Left ventricle myocardium superior (tissue), 1 donor: ENCODE measurements at regions of chr2 and their contacts with region 1.

Region 1: DNA sequence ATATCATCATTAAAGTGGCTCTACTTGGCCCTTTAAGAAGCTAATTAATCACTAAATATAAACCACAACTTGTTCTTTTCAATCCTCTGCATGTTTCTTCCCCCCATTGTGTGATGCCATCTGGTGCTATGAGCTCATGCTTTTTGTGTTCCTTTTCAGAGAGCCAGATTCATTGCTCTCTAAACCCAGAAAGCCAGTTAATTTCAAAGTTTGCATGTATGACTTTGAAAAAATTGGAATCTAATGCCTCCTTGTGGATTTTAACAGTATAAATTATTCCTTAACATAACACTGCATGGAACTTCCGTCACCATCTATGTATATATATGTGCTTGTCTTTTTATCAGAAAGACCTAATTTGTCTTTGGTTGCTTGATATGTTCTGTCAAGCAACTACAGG is 31.1 kb downstream of the TMEM178A start:
- DNase-seq: no peak
- ATAC-seq: peak; percentile 73

Region 2: DNA sequence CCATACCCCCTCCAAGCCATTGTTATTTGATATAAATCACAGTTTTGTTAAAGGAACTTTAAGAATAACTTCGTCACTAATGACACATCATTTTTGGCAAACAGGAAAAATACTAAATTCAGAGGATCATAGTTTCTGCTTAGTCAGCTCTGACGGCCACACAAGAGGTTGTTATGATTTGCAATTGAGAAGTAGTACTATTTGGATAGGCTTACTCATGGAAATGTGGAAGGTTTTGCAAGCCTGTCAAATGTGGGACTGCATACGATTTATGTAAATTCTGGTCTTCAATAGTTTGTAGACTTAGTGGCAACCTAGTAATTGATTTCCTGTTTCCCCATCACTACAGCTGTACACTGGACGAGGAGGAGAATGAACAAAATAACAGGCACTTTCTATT is 699.1 kb before region 1 on chr2:
- intact Hi-C with region 1: no loop called
- DNase-seq: no peak
- ATAC-seq: no peak

Region 3: GRCh38 chr2:39513641-39514094 is 183.2 kb before region 1 on chr2:
- intact Hi-C with region 1: loop called (anchors 5 kb)
- DNase-seq: no peak
- ATAC-seq: peak; percentile 47

Region 4: GRCh38 chr2:39593439-39594393 is 103.1 kb before region 1 on chr2:
- intact Hi-C with region 1: loop called (anchors 5 kb)
- DNase-seq: no peak
- ATAC-seq: peak; percentile 91

Region 5: DNA sequence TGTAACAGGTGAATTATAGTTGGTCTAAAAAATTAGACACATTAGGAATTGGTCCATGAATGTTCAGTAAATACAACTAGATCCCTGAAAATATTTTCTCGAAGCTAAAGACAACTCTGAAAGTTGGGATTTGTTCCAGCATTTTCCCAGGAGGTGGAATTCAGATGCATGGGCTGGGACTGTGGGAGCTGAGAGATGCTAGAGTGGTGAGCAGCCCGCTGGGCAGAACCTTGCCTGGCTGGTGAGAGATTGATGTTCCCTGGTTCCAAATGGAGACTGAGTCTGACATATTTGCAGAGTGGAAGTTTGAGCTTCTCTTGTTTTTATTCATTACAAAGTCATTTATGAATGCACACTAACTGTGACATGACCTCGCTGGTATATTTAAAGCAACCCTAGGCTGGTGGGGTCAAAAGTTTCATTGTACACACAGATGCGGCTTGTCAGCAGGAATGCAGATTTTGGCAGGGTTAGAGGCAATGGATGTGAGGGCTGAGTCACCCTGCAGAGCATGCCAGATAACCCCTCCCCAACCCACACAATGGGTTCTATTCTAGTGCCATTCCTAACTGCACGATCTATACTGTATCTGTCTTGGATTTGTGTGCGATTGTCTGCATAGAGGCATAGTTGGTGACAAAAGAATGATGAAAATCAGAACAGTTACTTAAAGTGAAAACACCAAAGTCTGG is 54.6 kb before region 1 on chr2:
- intact Hi-C with region 1: no loop called
- DNase-seq: no peak
- ATAC-seq: peak; percentile 76